ENCODE measurements at regions of chr1 and their contacts with region 1.

Region 1: GRCh38 chr1:234154320-234155251 is 218.7 kb upstream of the COA6 start:
- H3K4me3 Mint-ChIP-seq: no peak overlapping the region
- H3K27ac Mint-ChIP-seq: no peak overlapping the region
- H3K4me1 Mint-ChIP-seq: no peaks in the 10 kb centered on the region
- H3K27me3 Mint-ChIP-seq: peaks cover 1% of the 10 kb centered on the region

Region 2: GRCh38 chr1:234014208-234014607 is 140.4 kb before region 1 on chr1:
- intact Hi-C with region 1: no loop called
- H3K4me3 Mint-ChIP-seq: no peak overlapping the region
- H3K27ac Mint-ChIP-seq: no peak overlapping the region
- H3K4me1 Mint-ChIP-seq: no peaks in the 10 kb centered on the region
- H3K27me3 Mint-ChIP-seq: peaks cover 3% of the 10 kb centered on the region

Region 3: GRCh38 chr1:234326497-234327366 is 172.1 kb after region 1 on chr1:
- intact Hi-C with region 1: loop called (anchors 5 kb)
- H3K4me3 Mint-ChIP-seq: peak overlapping the region; percentile 40
- H3K27ac Mint-ChIP-seq: no peak overlapping the region
- H3K4me1 Mint-ChIP-seq: peaks cover 50% of the 10 kb centered on the region
- H3K27me3 Mint-ChIP-seq: peaks cover 7% of the 10 kb centered on the region